Dendritic cell treated with granulocyte-macrophage colony-stimulating factor and Interleukin-4, amounts not matched to agents 40 ng/mL and 50 ng/mL, for 4 days (primary cell): ENCODE measurements at regions of chr11 and their contacts with region 1.

Region 1: DNA sequence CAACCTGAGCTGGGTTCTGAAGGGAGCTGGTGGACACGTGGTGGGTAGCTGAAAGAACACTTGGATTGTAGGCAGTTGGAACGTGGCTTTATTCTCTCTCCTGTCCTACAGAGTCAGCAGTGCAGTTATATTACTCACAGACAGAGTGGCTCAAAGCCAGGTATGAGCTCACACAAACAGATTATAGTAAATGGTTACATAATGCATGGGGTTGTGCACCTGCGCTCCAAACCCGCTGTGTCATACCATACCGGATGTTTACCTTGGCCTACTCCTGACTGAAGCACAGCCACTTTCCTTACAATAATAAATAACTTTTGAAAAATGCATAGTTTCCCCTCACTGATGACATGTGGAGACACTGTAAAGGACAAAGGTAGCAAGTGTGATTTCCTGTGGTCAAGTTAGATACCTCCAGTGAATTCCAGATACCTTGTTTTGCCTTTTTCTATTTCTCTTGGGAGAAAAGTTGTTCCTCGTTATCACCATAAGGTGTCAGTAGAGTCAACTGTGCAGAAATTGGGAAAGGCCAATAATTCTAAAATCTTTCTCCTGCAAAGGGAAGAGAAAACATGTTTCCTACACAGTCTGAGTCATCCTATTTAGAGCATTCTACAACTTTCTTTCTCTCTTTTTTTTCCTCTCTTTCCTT is 13.5 kb downstream of the MS4A6A start:
- H3K4me3 Mint-ChIP-seq: no peak overlapping the region
- H3K27ac Mint-ChIP-seq: peak overlapping the region; percentile 79
- H3K4me1 Mint-ChIP-seq: peaks cover 69% of the 10 kb centered on the region
- H3K27me3 Mint-ChIP-seq: no peaks in the 10 kb centered on the region

Region 2: GRCh38 chr11:59857444-59858434 is 311.7 kb before region 1 on chr11:
- intact Hi-C with region 1: no loop called
- H3K4me3 Mint-ChIP-seq: no peak overlapping the region
- H3K27ac Mint-ChIP-seq: no peak overlapping the region
- H3K4me1 Mint-ChIP-seq: peaks cover 17% of the 10 kb centered on the region
- H3K27me3 Mint-ChIP-seq: no peaks in the 10 kb centered on the region

Region 3: DNA sequence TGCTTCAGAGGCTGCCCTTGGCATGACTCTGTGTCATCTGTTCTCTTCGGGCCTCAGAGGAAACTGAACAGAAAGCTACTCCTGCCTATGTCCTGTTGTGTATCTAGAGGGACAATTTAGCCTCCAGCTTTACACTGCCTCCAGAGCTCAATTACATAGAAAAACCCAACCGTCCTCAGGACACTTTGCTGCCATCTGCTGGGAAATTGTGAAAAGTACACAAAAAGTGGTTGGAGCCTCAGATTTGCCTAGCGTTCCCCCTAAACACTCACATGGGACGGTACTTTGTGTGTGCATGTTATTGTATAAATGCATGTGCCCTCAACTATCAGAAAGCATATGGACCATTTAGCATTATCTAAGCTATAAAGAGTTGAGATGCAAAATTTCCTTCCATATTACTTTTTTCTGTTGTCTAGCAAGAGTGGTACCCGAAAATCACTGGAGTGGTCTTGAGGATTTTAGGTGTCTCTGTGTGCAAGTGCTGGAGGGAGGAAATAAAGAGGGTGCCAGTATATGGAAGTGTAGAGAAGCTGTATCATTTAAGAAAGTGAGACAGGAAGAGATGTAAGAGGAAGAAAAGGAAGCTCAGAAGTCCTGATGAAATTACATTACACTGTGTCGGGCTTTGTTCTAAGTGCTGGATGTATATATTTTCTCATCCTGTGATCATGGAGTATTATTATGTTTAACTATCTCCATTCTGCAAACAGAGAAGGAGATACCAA is 82.3 kb after region 1 on chr11:
- intact Hi-C with region 1: loop called (anchors 5 kb)
- H3K4me3 Mint-ChIP-seq: no peak overlapping the region
- H3K27ac Mint-ChIP-seq: peak overlapping the region; percentile 87
- H3K4me1 Mint-ChIP-seq: peaks cover 69% of the 10 kb centered on the region
- H3K27me3 Mint-ChIP-seq: no peaks in the 10 kb centered on the region

Region 4: GRCh38 chr11:60378354-60378753 is 209.0 kb after region 1 on chr11 and contains the start of gene MS4A7:
- intact Hi-C with region 1: no loop called
- H3K4me3 Mint-ChIP-seq: peak within 1 kb of the TSS; percentile 96
- H3K27ac Mint-ChIP-seq: peak within 1 kb of the TSS; percentile 93
- H3K4me1 Mint-ChIP-seq: peaks cover 79% of the 10 kb centered on the region
- H3K27me3 Mint-ChIP-seq: no peaks in the 10 kb centered on the region

Region 5: DNA sequence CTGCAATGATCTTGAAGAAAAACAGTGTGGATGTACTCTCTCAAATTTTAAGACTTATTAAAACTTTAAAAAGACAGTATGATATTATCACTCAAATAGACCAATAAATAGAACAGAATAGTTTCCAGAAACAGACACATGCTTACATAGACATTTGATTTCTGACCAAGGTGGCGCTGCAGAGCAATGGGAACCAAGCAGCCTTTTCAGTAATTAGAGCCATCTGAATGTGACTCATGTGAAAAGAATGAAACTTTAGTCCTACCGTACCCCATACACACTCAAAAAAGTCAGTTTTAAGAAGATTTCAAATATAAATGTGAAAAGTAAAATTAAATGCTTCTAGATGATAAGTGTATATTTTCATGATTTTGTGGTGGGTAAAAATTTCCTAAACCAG is 455.9 kb after region 1 on chr11:
- intact Hi-C with region 1: loop called (anchors 10 kb)
- H3K4me3 Mint-ChIP-seq: no peak overlapping the region
- H3K27ac Mint-ChIP-seq: no peak overlapping the region
- H3K4me1 Mint-ChIP-seq: peaks cover 5% of the 10 kb centered on the region
- H3K27me3 Mint-ChIP-seq: no peaks in the 10 kb centered on the region